Lower leg skin (tissue), 4 donors: ENCODE measurements at regions of chr14 and their contacts with region 1.

Region 1: DNA sequence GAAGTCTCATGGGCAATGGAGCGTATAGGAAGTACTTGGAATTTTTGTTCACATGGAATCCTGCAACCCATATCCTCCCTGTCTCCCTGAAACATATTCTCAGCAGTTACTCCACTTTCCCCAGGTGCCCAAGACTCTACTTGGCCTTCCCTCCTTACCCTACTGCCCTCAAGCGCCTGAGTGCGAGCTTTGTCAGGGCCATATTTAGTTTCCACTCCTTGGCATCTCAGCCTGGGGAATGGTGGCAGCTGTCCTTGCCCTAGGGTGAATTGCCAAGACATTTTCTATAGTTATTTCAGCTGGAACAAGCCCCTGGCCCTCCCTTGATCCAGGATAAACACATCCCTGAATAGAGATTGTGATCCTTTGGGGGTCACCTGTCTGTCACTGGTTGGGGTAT is 569.3 kb upstream of the LRFN5 start:
- DNase-seq: no peak
- H3K4me3 ChIP-seq: no peak overlapping the region
- CTCF ChIP-seq: no peak
- POLR2A ChIP-seq: no peak

Region 2: DNA sequence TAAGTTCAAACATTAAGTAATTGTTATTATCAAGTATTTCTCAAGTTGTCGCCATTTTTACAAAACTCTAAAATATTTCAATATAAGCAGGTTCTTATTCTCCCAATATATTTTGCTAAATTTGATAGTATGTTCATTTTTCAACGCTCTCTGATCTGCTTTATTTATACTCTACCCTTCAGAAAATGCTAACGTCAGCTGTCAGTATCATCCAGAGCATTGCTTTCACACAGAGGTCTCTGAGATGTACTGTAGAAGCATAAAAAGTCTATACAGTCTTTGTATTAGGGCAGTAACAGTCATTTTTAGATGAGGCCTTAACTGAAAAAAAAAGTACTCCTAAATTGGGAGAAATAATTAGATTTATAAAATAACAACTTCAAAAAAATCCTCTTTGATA is 36.2 kb after region 1 on chr14:
- intact Hi-C with region 1: loop called (anchors 2 kb)
- DNase-seq: no peak
- H3K4me3 ChIP-seq: no peak overlapping the region
- CTCF ChIP-seq: no peak
- POLR2A ChIP-seq: no peak